H1 (cell line): ENCODE measurements at regions of chr17 and their contacts with region 1.

Region 1: DNA sequence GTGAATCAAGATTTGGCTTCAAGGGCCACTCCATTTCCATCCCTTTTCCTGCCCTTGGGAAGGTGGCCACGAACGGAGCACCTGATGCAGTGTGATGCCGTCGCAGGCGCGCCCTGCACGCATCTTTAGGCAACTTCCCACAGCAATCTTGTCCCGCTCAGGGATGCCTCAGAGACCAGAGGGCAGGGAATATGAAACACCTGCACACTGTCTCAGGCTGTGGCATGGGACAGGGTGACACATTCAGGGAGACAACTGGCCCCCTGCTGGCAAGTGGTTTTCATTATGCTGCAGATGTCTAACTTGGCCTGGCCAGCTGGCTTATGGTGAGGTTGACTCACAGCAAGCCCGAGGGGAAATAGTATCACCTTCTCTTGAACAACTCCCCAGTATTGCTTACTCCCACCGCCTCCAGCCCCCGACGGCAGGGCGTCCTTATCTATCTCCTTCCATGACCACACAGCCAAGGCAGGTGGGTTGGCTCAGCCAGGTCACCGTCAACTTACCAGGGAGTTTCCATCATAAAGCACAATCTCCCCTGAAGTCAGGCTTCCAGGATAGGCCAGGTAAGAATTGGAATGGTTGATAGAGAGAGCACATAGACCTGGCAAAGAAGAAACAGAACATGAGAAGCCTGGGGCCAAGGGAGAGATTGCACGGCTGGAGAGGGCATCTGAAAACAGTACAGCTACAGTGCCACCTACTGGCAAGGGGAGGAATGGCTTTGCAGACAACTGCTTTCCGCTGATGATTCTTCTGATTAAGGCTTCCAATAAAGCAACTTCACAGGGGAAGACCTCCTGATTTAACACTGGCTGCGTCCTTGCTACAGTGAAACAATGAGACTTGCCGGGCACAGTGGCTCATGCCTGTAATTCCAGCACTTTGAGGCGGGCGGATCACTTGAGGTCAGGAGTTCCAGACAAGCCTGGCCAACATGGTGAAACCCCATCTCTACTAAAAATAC is 21.1 kb downstream of the WIPI1 start:
- DNase-seq: peak in 1 of 2 experiments; percentile 89
- H3K4me3 ChIP-seq: no peak overlapping the region
- H3K27ac ChIP-seq: no peak overlapping the region
- H3K4me1 ChIP-seq: peaks cover 0 to 4% (median 0%) of the 10 kb centered on the region in 4 experiments; a peak in 2 of 7 replicates
- H3K27me3 ChIP-seq: no peaks in the 10 kb centered on the region
- CTCF ChIP-seq: peak; percentile 74 to 99 (median 87)
- EP300 ChIP-seq: no peak
- POLR2A ChIP-seq: no peak
- RAD21 ChIP-seq: peak; percentile 92 to 93

Region 2: DNA sequence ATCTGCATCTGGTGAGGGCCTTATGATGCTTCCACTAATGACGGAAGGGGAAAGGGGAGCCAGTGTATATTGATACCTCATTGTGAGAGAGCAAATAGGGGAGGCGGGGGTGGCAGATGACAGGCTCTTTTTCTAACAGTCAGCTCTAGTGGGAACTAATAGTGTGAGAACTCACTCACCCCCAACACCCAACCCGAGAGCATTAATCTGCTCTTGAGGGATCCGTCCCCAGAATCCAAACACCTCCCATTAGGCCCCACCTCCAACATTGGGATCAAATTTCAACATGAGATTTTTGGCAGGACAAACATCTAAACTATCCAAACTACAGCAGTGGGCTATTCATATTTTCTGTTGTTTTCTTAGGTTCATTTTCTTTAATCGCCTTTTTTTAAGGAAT is 556.5 kb before region 1 on chr17:
- CTCF ChIA-PET with region 1: no interaction called
- POLR2A ChIA-PET with region 1: no interaction called
- DNase-seq: no peak
- H3K4me3 ChIP-seq: no peak overlapping the region
- H3K27ac ChIP-seq: no peak overlapping the region
- H3K4me1 ChIP-seq: no peaks in the 10 kb centered on the region
- H3K27me3 ChIP-seq: no peaks in the 10 kb centered on the region
- CTCF ChIP-seq: no peak
- EP300 ChIP-seq: no peak
- POLR2A ChIP-seq: no peak
- RAD21 ChIP-seq: no peak

Region 3: DNA sequence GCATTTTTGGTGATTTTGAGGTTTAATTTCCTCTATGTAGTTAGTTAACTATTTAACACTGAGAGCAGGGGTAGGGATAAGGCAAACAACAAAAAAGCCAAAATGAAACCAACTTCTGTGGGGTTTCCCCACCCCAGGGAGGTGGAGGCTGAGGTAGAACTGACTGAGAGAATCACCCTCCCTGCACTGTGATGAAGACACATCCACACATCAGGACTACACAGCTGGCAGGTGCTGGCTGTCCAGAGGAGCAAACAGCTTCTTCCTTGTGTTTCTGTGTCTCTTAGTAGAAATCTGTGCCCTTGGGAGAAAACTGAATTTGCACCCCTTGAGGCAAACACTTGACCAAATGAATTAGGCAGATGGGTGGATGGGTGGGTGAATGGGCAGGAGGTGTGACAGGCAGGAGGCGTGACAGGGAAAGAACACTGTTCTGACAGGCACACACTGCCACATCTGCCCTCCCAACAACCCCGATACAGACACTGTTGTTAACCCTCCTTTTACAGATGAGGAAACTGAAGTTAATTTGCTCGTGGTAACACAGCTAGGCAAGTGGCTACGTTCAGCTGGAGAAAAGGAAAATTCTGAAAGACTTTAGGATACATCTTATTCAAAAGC is 251.2 kb before region 1 on chr17:
- CTCF ChIA-PET with region 1: interaction called, 11 read pairs
- POLR2A ChIA-PET with region 1: no interaction called
- DNase-seq: no peak
- H3K4me3 ChIP-seq: no peak overlapping the region
- H3K27ac ChIP-seq: no peak overlapping the region
- H3K4me1 ChIP-seq: peaks cover 0 to 4% (median 2%) of the 10 kb centered on the region in 4 experiments; a peak in 3 of 7 replicates
- H3K27me3 ChIP-seq: no peaks in the 10 kb centered on the region
- CTCF ChIP-seq: no peak
- EP300 ChIP-seq: no peak
- POLR2A ChIP-seq: no peak
- RAD21 ChIP-seq: no peak

Region 4: DNA sequence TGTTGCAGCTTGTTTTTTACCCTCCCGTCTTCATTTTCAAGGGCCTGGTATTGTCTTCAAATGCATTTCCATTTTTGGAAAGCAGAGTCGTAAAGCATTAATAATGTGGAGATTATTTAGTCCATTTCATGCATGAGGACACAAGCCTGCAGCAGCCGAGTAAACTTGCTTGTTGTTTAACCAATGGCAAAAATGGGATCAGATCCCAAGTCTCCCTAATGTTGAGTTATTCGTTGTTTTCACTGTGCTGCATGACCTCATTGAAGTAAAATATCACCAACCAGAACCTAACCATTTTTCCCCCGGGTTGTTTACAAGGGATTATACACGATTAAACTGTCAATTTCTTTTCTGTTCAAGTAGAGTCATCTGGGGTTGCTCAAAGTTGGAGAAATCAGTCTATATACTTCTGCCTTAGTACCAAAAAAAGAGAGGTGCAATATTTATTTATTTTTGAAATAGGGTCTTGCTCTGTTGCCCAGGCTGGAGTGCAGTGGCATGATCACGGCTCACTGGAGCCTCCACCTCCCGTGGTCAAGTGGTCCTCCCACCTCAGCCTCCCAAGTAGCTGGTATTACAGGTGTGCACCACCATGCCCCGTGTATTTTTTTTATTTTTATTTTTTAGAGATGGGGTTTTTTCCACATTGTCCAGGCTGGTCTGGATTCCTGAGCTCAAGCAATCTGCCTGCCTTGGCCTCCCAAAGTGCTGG is 176.0 kb before region 1 on chr17:
- CTCF ChIA-PET with region 1: interaction called, 98 read pairs
- POLR2A ChIA-PET with region 1: no interaction called
- DNase-seq: no peak
- H3K4me3 ChIP-seq: no peak overlapping the region
- H3K27ac ChIP-seq: no peak overlapping the region
- H3K4me1 ChIP-seq: peaks cover 0 to 6% (median under 1%) of the 10 kb centered on the region in 4 experiments; a peak in 2 of 7 replicates
- H3K27me3 ChIP-seq: 0 out of 7 replicates have a peak, but pooled peaks cover 0 to 3% (median 0%) of the 10 kb centered on the region in 4 experiments
- CTCF ChIP-seq: no peak
- EP300 ChIP-seq: no peak
- POLR2A ChIP-seq: no peak
- RAD21 ChIP-seq: no peak

Region 5: DNA sequence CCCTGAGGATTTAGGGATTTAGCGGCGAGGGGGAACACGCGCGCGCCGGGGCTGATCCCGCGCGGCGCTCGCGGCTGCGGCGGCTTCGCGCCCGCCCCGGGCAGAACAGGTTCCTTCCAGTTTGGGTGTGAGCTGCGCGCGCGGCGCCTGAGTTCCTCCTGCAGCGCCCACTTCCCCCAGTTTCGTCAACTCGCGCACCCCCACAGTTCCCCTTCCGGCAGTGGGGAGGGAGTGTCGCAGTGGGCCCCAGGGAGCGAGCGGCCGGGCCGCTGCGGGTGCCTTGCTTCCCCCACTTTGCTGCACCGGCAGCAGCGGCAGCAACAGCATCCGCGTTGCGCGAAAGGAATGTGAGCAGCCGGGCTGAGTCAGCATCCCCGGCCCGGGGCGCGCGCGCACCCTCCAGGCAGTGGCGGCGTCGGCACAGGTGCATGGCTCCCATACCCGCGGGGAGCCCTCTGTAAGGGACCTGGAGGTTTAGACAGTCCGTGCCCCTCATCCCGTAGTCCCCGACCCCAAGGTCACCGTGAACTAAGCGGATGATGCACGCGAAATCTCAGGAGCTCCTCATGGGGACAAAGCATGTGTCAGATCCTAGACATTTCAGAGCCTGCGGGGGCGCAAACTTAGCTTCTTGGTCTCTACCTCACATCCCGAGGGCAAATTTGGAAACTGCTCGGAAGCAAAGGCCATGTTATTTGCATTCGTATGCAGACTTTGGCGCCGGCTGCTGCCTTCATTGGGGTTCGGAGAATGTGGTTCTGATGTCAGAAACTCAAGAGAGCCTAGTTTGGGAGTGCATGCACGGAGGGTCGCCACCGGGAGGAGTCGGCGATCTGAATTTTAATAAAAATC is 144.1 kb before region 1 on chr17:
- CTCF ChIA-PET with region 1: interaction called, 15 read pairs
- POLR2A ChIA-PET with region 1: interaction called, 3 read pairs
- DNase-seq: peak in 1 of 2 experiments; percentile 85
- H3K4me3 ChIP-seq: peak overlapping the region; percentile 41 to 67 (median 56)
- H3K27ac ChIP-seq: 0 out of 2 replicates have a peak overlapping the region, but pooled peaks have one; percentile 44
- H3K4me1 ChIP-seq: peaks cover 18 to 40% (median 29%) of the 10 kb centered on the region in 4 experiments
- H3K27me3 ChIP-seq: peaks cover 8 to 25% (median 24%) of the 10 kb centered on the region in 4 experiments
- CTCF ChIP-seq: peak in 2 of 3 experiments; percentile 3 to 40; a peak in 3 of 4 replicates
- EP300 ChIP-seq: no peak
- POLR2A ChIP-seq: peak; percentile 37 to 61
- RAD21 ChIP-seq: peak; percentile 24 to 46; a peak in 3 of 4 replicates

Region 6: DNA sequence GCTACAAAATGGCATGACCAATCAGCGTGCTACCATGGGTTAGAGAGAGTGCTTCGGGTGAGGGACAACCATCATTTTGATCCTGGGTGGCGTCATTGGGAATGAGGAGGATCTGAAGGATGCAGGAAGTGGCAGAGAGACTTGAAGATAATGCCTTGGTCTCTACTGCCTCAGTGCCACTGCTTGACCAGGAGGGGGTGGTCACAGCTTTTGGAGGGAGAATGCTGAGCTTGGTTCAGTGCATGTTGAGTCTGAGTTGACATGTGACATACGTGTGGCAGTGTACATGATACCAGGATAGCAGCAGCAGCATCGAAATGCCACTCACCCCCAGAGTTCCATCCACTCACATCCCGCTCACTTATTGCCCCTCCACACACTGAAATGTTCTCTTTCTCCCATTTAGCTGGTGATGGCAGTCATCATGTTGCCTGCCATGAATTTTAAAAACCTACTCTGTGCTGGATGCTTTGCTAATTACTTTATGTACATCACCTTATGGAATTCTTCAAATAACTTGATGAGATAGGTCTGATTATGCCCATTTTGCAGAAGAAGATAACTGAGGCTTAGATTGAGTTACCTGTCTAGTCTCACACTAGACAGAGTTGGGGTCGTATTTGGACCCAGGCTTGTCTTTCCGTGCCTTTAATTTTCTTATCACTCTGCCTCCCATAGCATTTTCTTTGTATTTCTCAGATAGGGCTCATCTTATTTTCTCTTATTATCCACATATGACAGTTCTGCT is 108.2 kb before region 1 on chr17:
- CTCF ChIA-PET with region 1: interaction called, 12 read pairs
- POLR2A ChIA-PET with region 1: no interaction called
- DNase-seq: no peak
- H3K4me3 ChIP-seq: no peak overlapping the region
- H3K27ac ChIP-seq: no peak overlapping the region
- H3K4me1 ChIP-seq: no peaks in the 10 kb centered on the region
- H3K27me3 ChIP-seq: no peaks in the 10 kb centered on the region; a peak in 1 of 7 replicates
- CTCF ChIP-seq: peak; percentile 37 to 65 (median 45)
- EP300 ChIP-seq: no peak
- POLR2A ChIP-seq: no peak
- RAD21 ChIP-seq: peak; percentile 55 to 58

Region 7: DNA sequence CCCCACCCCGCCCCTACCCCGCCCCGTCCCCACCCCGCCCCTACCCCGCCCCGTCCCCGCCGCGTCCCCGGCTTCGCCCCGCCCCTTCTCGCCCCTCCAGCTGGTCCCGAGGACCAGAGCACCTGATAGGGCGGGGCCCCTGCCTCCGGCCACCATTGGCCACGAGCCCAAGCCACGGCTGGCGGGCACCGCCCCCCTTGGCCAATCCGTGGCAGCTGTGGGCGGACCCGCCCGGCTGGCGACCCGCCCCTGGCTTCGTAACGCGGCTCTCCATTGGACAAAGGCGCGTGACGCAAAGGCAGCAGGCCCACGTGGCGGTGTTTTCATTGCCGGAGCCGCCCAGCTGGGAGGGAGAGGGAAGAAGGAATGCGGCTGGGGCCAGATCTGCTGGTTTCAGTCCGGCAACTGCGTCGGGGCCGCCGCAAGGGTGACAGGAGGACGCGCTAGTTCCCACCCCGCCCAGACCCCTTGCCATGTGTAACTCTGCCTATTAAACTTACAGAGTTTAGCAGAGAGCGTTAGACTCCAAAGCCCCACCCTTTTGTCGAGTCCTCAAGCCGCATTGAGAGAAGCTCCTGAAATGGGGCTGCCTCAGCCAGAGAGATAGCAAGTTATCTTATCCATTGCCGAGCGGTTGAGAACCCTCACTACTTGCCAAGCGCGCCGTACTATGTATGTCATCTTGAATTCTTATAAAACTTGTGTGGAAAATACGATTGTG is 21.5 kb after region 1 on chr17:
- CTCF ChIA-PET with region 1: interaction called, 25 read pairs
- POLR2A ChIA-PET with region 1: interaction called, 3 read pairs
- DNase-seq: peak; percentile 97 to 98
- H3K4me3 ChIP-seq: peak overlapping the region; percentile 40 to 71 (median 53)
- H3K27ac ChIP-seq: no peak overlapping the region
- H3K4me1 ChIP-seq: peaks cover 3 to 7% (median 5%) of the 10 kb centered on the region in 4 experiments; a peak in 6 of 7 replicates
- H3K27me3 ChIP-seq: no peaks in the 10 kb centered on the region
- CTCF ChIP-seq: no peak
- EP300 ChIP-seq: peak in 1 of 2 experiments; percentile 83; a peak in 1 of 3 replicates
- POLR2A ChIP-seq: peak in 1 of 2 experiments; percentile 64; a peak in 1 of 3 replicates
- RAD21 ChIP-seq: 0 out of 4 replicates have a peak, but pooled peaks of 1 of the 2 experiments have one; percentile 2

Region 8: DNA sequence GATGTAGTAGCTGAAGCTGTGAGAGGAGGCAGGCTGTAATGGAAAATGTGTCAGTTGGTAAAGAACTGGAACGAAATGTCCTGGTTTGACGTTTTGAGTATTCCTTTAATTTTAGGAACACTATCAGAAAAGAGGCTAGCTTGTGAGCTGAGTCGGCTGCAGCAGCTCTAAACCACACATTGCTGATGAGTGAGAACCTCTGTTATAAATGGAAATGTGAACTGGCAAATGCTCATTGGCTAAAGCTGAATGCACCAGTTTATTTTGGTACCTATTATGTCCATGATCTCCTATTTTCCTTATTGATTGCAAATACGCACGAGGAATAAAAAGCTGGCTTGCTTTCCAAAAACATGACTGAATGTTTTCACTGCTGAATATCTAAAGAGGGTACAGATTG is 32.2 kb after region 1 on chr17:
- CTCF ChIA-PET with region 1: interaction called, 19 read pairs
- POLR2A ChIA-PET with region 1: no interaction called
- DNase-seq: no peak
- H3K4me3 ChIP-seq: no peak overlapping the region
- H3K27ac ChIP-seq: no peak overlapping the region
- H3K4me1 ChIP-seq: peaks cover 0 to 3% (median 0%) of the 10 kb centered on the region in 4 experiments; a peak in 3 of 7 replicates
- H3K27me3 ChIP-seq: no peaks in the 10 kb centered on the region
- CTCF ChIP-seq: no peak
- EP300 ChIP-seq: no peak
- POLR2A ChIP-seq: no peak
- RAD21 ChIP-seq: no peak